Ascending aorta (tissue), 2 donors: ENCODE measurements at regions of chr5 and their contacts with region 1.

Region 1: GRCh38 chr5:109688971-109689739 is 572 bp upstream of the MAN2A1 start:
- DNase-seq: peak; percentile 33 to 92
- H3K4me3 ChIP-seq: peak overlapping the region; percentile 87 to 98
- H3K27ac ChIP-seq: peak overlapping the region; percentile 99 to 100
- H3K4me1 ChIP-seq: peaks cover 6 to 15% of the 10 kb centered on the region in 2 donors
- H3K27me3 ChIP-seq: no peaks in the 10 kb centered on the region
- CTCF ChIP-seq: peak in 1 of 3 experiments; percentile 9

Region 2: GRCh38 chr5:109409844-109410388 is 279.2 kb before region 1 on chr5 and contains the start of gene PJA2:
- intact Hi-C with region 1: loop called (anchors 1 kb)
- DNase-seq: peak; percentile 99 to 100
- H3K4me3 ChIP-seq: peak within 1 kb of the TSS; percentile 86 to 94
- H3K27ac ChIP-seq: peak within 1 kb of the TSS; percentile 98
- H3K4me1 ChIP-seq: peaks cover 2 to 25% of the 10 kb centered on the region in 2 donors
- H3K27me3 ChIP-seq: no peaks in the 10 kb centered on the region
- CTCF ChIP-seq: peak; percentile 8 to 27 (median 17)
- total RNA-seq, gene PJA2: 56.1 TPM

Region 3: DNA sequence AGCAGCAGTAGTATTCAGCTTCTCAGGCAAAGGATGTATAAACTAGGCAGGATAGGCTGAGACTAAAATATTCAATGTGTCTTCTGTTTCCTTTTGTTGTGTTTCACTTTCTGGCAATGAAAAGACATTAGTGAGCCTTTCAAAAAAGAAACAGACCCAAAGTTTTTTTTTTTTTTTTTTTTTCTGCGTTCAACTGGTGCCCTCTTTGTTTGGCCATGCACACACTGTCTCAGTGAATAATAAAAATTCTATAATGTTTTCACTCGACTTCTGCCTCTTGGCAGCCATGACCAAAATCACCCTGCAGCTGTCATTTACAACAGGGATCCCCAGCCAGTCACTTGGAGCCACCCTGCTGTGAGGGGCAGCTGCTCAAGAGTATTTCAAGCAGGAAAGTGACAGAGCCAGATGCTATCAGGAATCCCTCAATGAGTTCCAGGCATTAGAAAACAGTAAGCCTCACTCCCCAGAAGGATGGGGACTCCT is 43.4 kb before region 1 on chr5:
- intact Hi-C with region 1: no loop called
- DNase-seq: no peak
- H3K4me3 ChIP-seq: no peak overlapping the region
- H3K27ac ChIP-seq: peak overlapping the region; percentile 2 to 48
- H3K4me1 ChIP-seq: no peaks in the 10 kb centered on the region
- H3K27me3 ChIP-seq: no peaks in the 10 kb centered on the region
- CTCF ChIP-seq: no peak

Region 4: DNA sequence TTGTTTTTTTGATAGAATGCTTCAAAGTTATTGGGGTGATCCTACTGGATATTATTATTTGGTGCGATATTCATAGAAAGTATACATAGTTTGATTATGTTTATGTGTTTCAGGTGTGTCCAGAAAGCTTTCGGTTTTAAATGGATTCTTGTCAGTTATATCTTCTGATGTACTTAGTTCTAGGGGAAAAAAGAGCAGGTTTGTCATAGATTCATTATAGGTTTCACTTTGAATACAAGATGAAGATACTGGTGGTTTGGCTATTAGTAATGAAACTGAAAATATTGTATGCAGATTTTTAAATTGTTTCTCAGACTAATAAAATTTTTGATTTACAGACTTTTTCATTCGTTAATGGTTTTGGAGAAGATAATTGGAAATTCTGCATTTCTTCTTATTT is 99.4 kb after region 1 on chr5:
- intact Hi-C with region 1: loop called (anchors 5 kb)
- DNase-seq: no peak
- H3K4me3 ChIP-seq: no peak overlapping the region
- H3K27ac ChIP-seq: no peak overlapping the region
- H3K4me1 ChIP-seq: no peaks in the 10 kb centered on the region
- H3K27me3 ChIP-seq: no peaks in the 10 kb centered on the region
- CTCF ChIP-seq: no peak

Region 5: DNA sequence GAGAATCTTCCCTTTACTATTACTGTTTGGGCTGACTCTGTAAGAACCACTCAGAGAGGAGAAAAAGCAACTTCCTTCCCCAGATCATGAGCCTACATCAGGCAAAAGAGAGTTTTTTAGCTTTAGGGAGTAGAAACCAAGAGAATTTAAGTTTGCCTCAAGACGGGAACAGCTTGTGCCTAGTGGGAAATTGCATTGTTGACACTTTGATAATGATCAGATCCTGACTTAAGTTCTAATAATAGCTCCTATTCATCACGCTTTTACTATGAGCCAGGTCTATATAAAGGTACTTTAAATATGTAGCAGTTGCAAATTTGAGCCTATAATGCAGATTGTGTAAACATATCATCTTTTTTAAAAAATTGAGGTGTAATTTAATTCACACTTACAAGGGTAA is 298.8 kb after region 1 on chr5:
- intact Hi-C with region 1: loop called (anchors 5 kb)
- DNase-seq: no peak
- H3K4me3 ChIP-seq: peak overlapping the region in 1 of 2 donors; percentile 7
- H3K27ac ChIP-seq: peak overlapping the region; percentile 90 to 97
- H3K4me1 ChIP-seq: peaks cover 0 to 28% of the 10 kb centered on the region in 2 donors
- H3K27me3 ChIP-seq: no peaks in the 10 kb centered on the region
- CTCF ChIP-seq: no peak

Region 6: GRCh38 chr5:110086658-110087388 is 397.7 kb after region 1 on chr5:
- intact Hi-C with region 1: loop called (anchors 5 kb)
- DNase-seq: peak; percentile 42 to 91
- H3K4me3 ChIP-seq: no peak overlapping the region
- H3K27ac ChIP-seq: peak overlapping the region; percentile 52 to 66
- H3K4me1 ChIP-seq: peaks cover 0 to 25% of the 10 kb centered on the region in 2 donors
- H3K27me3 ChIP-seq: no peaks in the 10 kb centered on the region
- CTCF ChIP-seq: no peak

Region 7: GRCh38 chr5:110496276-110496675 is 807.1 kb after region 1 on chr5:
- intact Hi-C with region 1: loop called (anchors 10 kb)
- DNase-seq: no peak
- H3K4me3 ChIP-seq: no peak overlapping the region
- H3K27ac ChIP-seq: no peak overlapping the region
- H3K4me1 ChIP-seq: no peaks in the 10 kb centered on the region
- H3K27me3 ChIP-seq: no peaks in the 10 kb centered on the region
- CTCF ChIP-seq: peak in 1 of 3 experiments; percentile 21

Region 8: GRCh38 chr5:110738812-110739651 is 1049.9 kb after region 1 on chr5 and contains the start of gene SLC25A46:
- intact Hi-C with region 1: loop called (anchors 10 kb)
- DNase-seq: peak; percentile 63 to 94
- H3K4me3 ChIP-seq: peak within 1 kb of the TSS; percentile 85 to 98
- H3K27ac ChIP-seq: peak within 1 kb of the TSS; percentile 78 to 87
- H3K4me1 ChIP-seq: peaks cover 2 to 3% of the 10 kb centered on the region in 2 donors
- H3K27me3 ChIP-seq: no peaks in the 10 kb centered on the region
- CTCF ChIP-seq: no peak
- total RNA-seq, gene SLC25A46: 22.1 TPM